Mammary epithelial cell (primary cell): ENCODE measurements at regions of chr1 and their contacts with region 1.

Region 1: DNA sequence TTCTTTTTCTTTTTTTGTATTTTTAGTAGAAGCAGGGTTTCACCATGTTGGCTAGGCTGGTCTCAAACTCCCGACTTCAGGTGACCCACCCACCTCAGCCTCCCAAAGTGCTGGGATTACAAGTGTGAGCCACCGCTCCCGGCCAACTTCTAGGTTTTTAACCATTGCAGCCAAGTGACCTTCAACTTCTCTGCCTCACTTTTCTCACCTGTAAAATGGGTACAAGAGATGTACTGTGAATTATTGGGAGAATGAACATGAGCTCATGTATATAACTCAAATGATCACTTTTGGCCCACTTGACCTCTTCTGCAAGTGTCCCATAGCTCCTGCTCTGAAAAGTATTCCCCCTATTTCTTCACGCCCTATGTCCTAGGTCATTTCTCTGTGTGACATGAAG is 11.8 kb upstream of the RPL11 start:
- DNase-seq: no peak
- H3K4me3 ChIP-seq: no peak overlapping the region
- H3K27ac ChIP-seq: no peak overlapping the region
- H3K4me1 ChIP-seq: no peaks in the 10 kb centered on the region
- H3K27me3 ChIP-seq: no peaks in the 10 kb centered on the region
- CTCF ChIP-seq: no peak

Region 2: GRCh38 chr1:23601071-23601967 is 78.5 kb before region 1 on chr1:
- CTCF ChIA-PET with region 1: no interaction called
- dilution Hi-C with region 1: loop called (anchors 5 kb)
- in situ Hi-C with region 1: no loop called
- intact Hi-C with region 1: no loop called
- DNase-seq: no peak
- H3K4me3 ChIP-seq: no peak overlapping the region
- H3K27ac ChIP-seq: no peak overlapping the region
- H3K4me1 ChIP-seq: no peaks in the 10 kb centered on the region
- H3K27me3 ChIP-seq: no peaks in the 10 kb centered on the region
- CTCF ChIP-seq: no peak

Region 3: DNA sequence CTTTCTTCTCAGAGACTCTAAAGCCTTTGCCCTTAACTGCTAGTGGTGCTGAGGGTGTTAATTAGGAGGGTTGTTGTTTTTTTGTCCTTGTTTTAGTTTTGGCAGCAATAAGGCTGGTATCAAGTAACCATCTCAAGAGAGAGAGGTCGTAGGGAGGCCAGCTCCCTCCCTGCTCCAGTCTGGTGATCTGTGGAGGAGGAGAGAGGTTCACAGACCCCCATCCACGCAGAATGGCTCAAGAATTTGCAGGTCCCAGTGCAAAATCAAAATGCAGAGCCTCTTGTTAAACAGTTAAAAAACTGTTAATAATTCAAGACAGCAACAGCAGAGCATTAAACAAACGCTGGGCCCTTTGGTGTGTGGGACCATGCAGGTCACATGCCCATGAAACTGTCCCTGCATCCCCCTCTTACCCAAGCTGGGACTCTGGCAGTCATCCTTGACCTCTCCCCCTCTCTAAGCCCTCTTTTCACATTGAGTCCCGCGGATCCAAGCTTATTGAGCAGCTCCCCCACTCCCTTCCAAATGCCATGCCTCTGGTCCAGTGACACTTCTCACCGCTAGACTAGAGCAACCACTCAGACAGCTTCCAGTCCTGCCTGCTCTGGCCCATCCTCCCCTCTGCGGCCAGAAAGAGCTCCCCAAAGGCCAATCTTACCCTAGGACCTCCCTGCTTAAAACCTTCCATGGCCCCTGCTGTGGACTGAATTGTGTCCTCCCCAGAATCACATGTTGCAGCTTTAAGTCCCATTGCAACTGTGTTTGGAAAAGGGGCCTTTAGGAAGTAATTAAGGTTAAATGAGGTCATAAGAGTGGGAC is 35.9 kb before region 1 on chr1:
- CTCF ChIA-PET with region 1: no interaction called
- dilution Hi-C with region 1: no loop called
- in situ Hi-C with region 1: no loop called
- intact Hi-C with region 1: no loop called
- DNase-seq: no peak
- H3K4me3 ChIP-seq: no peak overlapping the region
- H3K27ac ChIP-seq: no peak overlapping the region
- H3K4me1 ChIP-seq: no peaks in the 10 kb centered on the region
- H3K27me3 ChIP-seq: no peaks in the 10 kb centered on the region
- CTCF ChIP-seq: no peak

Region 4: GRCh38 chr1:23691499-23692307 is 11.9 kb after region 1 on chr1 and contains the start of gene RPL11:
- CTCF ChIA-PET with region 1: no interaction called
- dilution Hi-C with region 1: no loop called
- in situ Hi-C with region 1: no loop called
- intact Hi-C with region 1: no loop called
- DNase-seq: peak; percentile 88
- H3K4me3 ChIP-seq: peak within 1 kb of the TSS; percentile 88 to 99 (median 97)
- H3K27ac ChIP-seq: peak within 1 kb of the TSS; percentile 87
- H3K4me1 ChIP-seq: peaks cover 27% of the 10 kb centered on the region
- H3K27me3 ChIP-seq: no peaks in the 10 kb centered on the region
- CTCF ChIP-seq: peak; percentile 83 to 84
- total RNA-seq, gene RPL11: 376 to 1,022 TPM

Region 5: DNA sequence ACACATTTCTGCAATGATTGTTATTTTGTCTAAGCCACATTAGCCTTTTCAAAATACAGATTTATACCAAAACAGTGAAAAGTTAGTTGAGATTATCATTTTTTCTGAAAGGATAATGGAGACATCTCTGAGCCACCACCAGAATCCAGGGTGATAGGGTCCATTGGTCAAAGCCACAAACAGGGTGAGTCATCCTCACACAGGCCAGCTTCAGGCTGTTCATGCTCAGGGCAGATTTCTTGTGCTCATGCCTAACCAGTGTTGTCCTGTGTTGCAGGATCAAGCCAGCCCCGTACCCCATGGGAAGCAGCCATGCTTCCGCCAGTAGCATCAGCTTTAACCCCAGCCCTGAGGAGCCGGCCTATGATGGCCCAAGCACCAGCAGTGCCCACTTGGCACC is 76.9 kb after region 1 on chr1:
- CTCF ChIA-PET with region 1: no interaction called
- dilution Hi-C with region 1: loop called (anchors 5 kb)
- in situ Hi-C with region 1: no loop called
- intact Hi-C with region 1: no loop called
- DNase-seq: peak; percentile 55
- H3K4me3 ChIP-seq: no peak overlapping the region
- H3K27ac ChIP-seq: no peak overlapping the region
- H3K4me1 ChIP-seq: peaks cover 6% of the 10 kb centered on the region
- H3K27me3 ChIP-seq: no peaks in the 10 kb centered on the region
- CTCF ChIP-seq: no peak

Region 6: DNA sequence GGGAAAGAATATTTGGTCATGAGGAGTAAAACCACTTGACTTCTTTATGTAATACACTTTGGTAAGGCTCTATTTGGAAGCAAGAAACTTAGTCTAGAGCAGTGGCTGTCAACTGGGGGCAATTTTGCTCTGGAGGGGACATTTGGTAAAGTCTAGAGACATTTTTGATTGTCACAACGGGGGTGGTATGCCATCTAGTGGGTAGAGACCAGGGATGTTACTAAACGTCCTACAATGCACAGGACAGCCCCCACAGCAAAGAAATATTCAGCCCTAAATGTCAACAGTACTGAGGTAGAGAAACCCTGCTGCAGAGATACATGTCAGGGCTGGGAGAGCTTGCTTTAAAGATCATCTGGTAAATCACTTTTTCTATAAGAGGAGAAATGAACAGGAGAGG is 174.8 kb after region 1 on chr1:
- CTCF ChIA-PET with region 1: no interaction called
- dilution Hi-C with region 1: no loop called
- in situ Hi-C with region 1: no loop called
- intact Hi-C with region 1: no loop called
- DNase-seq: no peak
- H3K4me3 ChIP-seq: no peak overlapping the region
- H3K27ac ChIP-seq: no peak overlapping the region
- H3K4me1 ChIP-seq: no peaks in the 10 kb centered on the region
- H3K27me3 ChIP-seq: no peaks in the 10 kb centered on the region
- CTCF ChIP-seq: peak in 1 of 2 donors; percentile 36